ENCODE measurements at regions of chrX and their contacts with region 1.

Region 1: DNA sequence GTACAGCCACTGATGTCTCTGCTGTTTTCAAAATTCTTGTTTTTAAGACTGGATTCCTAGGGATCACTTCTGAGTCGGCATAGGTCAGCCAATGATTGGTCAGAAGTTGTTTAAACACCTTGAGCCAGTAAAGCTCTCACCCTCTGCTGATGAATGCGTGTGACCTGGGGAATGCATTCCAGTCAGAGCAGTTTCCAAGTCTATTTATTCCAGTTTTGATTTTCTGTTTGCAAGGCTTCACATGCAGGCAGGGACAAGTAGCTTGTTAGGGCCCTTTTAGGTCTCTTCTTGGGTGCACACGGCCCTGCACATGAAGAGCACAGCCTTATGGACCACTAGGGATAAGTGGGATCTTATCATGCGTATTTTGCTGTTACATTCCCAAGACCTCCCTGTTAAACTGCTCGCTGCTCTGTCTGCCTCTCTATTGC is 47.0 kb downstream of the KLHL15 start:
- DNase-seq: peak; percentile 14
- ATAC-seq: peak; percentile 46
- H3K4me3 ChIP-seq: no peak overlapping the region
- H3K27ac ChIP-seq: no peak overlapping the region
- H3K4me1 ChIP-seq: peaks cover 4% of the 10 kb centered on the region; the same call in 1 of the 2 replicates
- H3K27me3 ChIP-seq: peaks cover 4% of the 10 kb centered on the region
- CTCF ChIP-seq: no peak
- POLR2A ChIP-seq: no peak
- RAD21 ChIP-seq: no peak

Region 2: GRCh38 chrX:23871905-23872546 is 108.0 kb before region 1 on chrX:
- CTCF ChIA-PET with region 1: no interaction called
- POLR2A ChIA-PET with region 1: interaction called, 10 read pairs
- dilution Hi-C with region 1: no loop called
- in situ Hi-C with region 1: no loop called
- intact Hi-C with region 1: no loop called
- DNase-seq: no peak
- ATAC-seq: no peak
- H3K4me3 ChIP-seq: no peak overlapping the region
- H3K27ac ChIP-seq: no peak overlapping the region
- H3K4me1 ChIP-seq: no peaks in the 10 kb centered on the region
- H3K27me3 ChIP-seq: no peaks in the 10 kb centered on the region
- CTCF ChIP-seq: no peak
- POLR2A ChIP-seq: no peak
- RAD21 ChIP-seq: no peak

Region 3: GRCh38 chrX:23993012-23993633 is 13.1 kb after region 1 on chrX:
- CTCF ChIA-PET with region 1: no interaction called
- POLR2A ChIA-PET with region 1: no interaction called
- dilution Hi-C with region 1: no loop called
- in situ Hi-C with region 1: no loop called
- intact Hi-C with region 1: no loop called
- DNase-seq: peak; percentile 39
- ATAC-seq: no peak
- H3K4me3 ChIP-seq: no peak overlapping the region
- H3K27ac ChIP-seq: no peak overlapping the region
- H3K4me1 ChIP-seq: no peaks in the 10 kb centered on the region; the same call in 1 of the 2 replicates
- H3K27me3 ChIP-seq: no peaks in the 10 kb centered on the region; the same call in 1 of the 2 replicates
- CTCF ChIP-seq: no peak
- POLR2A ChIP-seq: no peak
- RAD21 ChIP-seq: no peak

Region 4: GRCh38 chrX:24231131-24231540 is 251.1 kb after region 1 on chrX:
- CTCF ChIA-PET with region 1: no interaction called
- POLR2A ChIA-PET with region 1: no interaction called
- dilution Hi-C with region 1: no loop called
- in situ Hi-C with region 1: no loop called
- intact Hi-C with region 1: loop called (anchors 10 kb)
- DNase-seq: peak; percentile 93
- ATAC-seq: peak; percentile 97
- H3K4me3 ChIP-seq: no peak overlapping the region
- H3K27ac ChIP-seq: no peak overlapping the region
- H3K4me1 ChIP-seq: peaks cover 2% of the 10 kb centered on the region; the same call in 1 of the 2 replicates
- H3K27me3 ChIP-seq: peaks cover 4% of the 10 kb centered on the region
- CTCF ChIP-seq: no peak
- POLR2A ChIP-seq: no peak
- RAD21 ChIP-seq: no peak

Measured in IMR-90 (cell line).